ENCODE measurements at regions of chr2 and their contacts with region 1.

Region 1: DNA sequence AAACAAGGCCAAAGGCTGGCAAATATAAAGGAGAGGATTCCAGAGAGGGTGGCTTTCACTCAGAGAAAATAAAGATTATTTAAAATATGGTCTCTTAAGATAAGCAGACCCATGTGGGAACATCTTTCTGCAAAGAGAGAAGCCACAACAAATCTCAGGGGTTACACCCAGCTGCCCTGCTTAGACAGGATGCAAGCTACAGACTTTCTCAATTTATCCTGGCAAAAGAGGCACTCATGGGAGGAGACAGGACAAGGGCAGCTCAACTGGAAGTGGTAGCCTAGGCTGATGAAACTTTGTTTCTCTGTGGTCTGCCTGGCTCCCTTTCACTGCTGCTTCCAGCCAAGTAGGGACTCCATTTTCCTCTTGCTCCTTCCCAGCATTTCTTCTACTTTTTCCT is 25.9 kb upstream of the SULT1C4 start:
- DNase-seq: no peak
- H3K4me3 ChIP-seq: no peak overlapping the region
- H3K27ac ChIP-seq: no peak overlapping the region
- H3K4me1 ChIP-seq: no peaks in the 10 kb centered on the region
- H3K27me3 ChIP-seq: no peaks in the 10 kb centered on the region
- CTCF ChIP-seq: no peak

Region 2: GRCh38 chr2:108583903-108584520 is 232.1 kb after region 1 on chr2:
- intact Hi-C with region 1: loop called (anchors 10 kb)
- DNase-seq: peak in 4 of 5 donors; percentile 67 to 94 (median 82)
- H3K4me3 ChIP-seq: no peak overlapping the region
- H3K27ac ChIP-seq: no peak overlapping the region
- H3K4me1 ChIP-seq: peaks cover 9 to 24% (median 22%) of the 10 kb centered on the region in 3 donors
- H3K27me3 ChIP-seq: no peaks in the 10 kb centered on the region
- CTCF ChIP-seq: peak; percentile 77

Region 3: GRCh38 chr2:108607706-108608301 is 255.9 kb after region 1 on chr2:
- intact Hi-C with region 1: no loop called
- DNase-seq: peak in 2 of 5 donors; percentile 67 to 75
- H3K4me3 ChIP-seq: no peak overlapping the region
- H3K27ac ChIP-seq: no peak overlapping the region
- H3K4me1 ChIP-seq: peaks cover 0 to 2% (median 0%) of the 10 kb centered on the region in 3 donors
- H3K27me3 ChIP-seq: no peaks in the 10 kb centered on the region
- CTCF ChIP-seq: peak; percentile 69

Measured in kidney (tissue), 22 donors.